ENCODE measurements at regions of chr11 and their contacts with region 1.

Region 1: GRCh38 chr11:67382276-67383136 is 9.1 kb upstream of the CLCF1 start:
- DNase-seq: peak; percentile 76 to 87 (median 80)
- ATAC-seq: peak; percentile 72 to 88 (median 88)
- H3K4me3 ChIP-seq: no peak overlapping the region
- H3K27ac ChIP-seq: no peak overlapping the region
- H3K4me1 ChIP-seq: peaks cover 0 to 27% (median 5%) of the 10 kb centered on the region in 12 donors
- H3K27me3 ChIP-seq: no peaks in the 10 kb centered on the region
- CTCF ChIP-seq: peak; percentile 92 to 99 (median 96)
- POLR2A ChIP-seq: no peak

Region 2: DNA sequence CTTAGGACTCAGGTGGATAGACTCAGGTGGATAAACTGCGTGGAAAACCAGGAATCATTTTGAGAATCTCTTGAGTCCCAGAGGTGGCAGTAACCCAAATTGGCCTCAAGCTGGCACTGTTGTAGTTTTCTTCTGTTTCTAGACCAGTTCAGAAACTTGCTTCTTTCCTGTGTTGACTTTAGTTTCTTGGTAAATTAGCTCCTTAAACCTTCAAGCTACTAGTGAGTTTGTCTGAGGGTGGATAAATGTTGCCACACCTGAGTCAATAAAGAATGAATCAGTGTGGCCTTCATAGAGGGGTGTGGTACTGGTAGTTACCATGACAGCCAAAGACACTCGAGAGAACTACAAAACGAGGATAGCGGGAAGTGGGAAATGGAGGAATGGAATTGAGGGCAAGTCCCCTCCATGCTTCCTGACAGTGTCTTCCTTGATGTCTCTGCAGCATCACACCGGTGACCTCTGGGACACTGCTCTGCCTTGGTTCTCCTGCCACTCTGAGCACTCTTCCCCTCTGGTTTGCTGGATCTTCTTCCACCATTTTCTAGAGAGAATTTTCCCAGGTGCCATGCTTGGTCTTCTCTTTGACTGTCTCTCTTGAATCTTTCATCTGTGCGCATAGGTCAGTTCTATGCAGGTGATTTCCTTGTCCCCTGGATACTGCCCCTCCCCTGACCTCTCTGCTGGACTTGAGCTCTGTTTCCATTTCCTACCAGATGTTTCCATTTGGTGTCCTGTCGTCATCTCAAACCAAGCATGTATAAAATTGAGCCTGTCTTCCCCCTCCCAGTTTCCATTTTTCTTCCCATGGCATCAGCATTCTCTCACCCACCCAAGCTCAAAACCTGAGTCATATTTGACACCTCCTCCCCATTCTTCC is 36.3 kb before region 1 on chr11:
- intact Hi-C with region 1: loop called in 6 of 10 experiments (anchors 5 kb)
- DNase-seq: no peak
- ATAC-seq: peak in 1 of 4 donors; percentile 23
- H3K4me3 ChIP-seq: no peak overlapping the region
- H3K27ac ChIP-seq: no peak overlapping the region
- H3K4me1 ChIP-seq: peaks cover 0 to 25% (median 12%) of the 10 kb centered on the region in 12 donors
- H3K27me3 ChIP-seq: no peaks in the 10 kb centered on the region
- CTCF ChIP-seq: peak in 11 of 12 donors; percentile 3 to 57 (median 34)
- POLR2A ChIP-seq: no peak

Measured in heart left ventricle (tissue), 16 donors.